Esophagus squamous epithelium (tissue), 5 donors: ENCODE measurements at regions of chr11 and their contacts with region 1.

Region 1: GRCh38 chr11:45102810-45103621 is 43.4 kb upstream of the PRDM11 start:
- DNase-seq: no peak
- H3K4me3 ChIP-seq: peak overlapping the region in 1 of 4 donors; percentile 27
- H3K27ac ChIP-seq: no peak overlapping the region
- H3K4me1 ChIP-seq: peaks cover 7 to 17% (median 8%) of the 10 kb centered on the region in 3 donors
- H3K27me3 ChIP-seq: peaks cover 0 to 25% (median 0%) of the 10 kb centered on the region in 4 donors
- CTCF ChIP-seq: peak; percentile 73 to 98 (median 95)
- POLR2A ChIP-seq: no peak

Region 2: DNA sequence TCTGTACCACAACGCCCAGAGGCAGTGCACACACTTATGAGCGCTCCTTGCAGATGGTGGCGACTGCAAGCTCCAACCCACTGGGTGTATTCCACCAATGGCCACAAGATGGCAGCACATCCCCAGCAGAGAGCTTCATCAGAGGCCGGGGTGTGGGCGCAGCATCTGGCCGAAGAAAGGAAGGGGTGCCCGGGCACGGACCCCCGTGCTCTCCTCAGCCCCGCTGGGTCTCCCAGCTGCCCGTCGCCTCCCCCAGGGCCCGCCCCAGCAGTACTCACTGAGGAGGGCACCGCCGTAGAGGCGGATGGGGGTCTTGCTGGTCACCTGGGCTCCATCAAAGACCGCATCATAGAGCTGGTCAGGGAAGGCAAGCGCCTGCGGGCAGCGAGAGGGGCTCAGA is 166.5 kb before region 1 on chr11:
- intact Hi-C with region 1: loop called (anchors 2 kb)
- DNase-seq: peak; percentile 25
- H3K4me3 ChIP-seq: no peak overlapping the region
- H3K27ac ChIP-seq: no peak overlapping the region
- H3K4me1 ChIP-seq: peaks cover 0 to 37% (median 0%) of the 10 kb centered on the region in 3 donors
- H3K27me3 ChIP-seq: no peaks in the 10 kb centered on the region
- CTCF ChIP-seq: peak; percentile 95 to 99 (median 97)
- POLR2A ChIP-seq: no peak

Region 3: GRCh38 chr11:45217991-45218390 is 115.0 kb after region 1 on chr11:
- intact Hi-C with region 1: no loop called
- DNase-seq: no peak
- H3K4me3 ChIP-seq: no peak overlapping the region
- H3K27ac ChIP-seq: no peak overlapping the region
- H3K4me1 ChIP-seq: no peaks in the 10 kb centered on the region
- H3K27me3 ChIP-seq: no peaks in the 10 kb centered on the region
- CTCF ChIP-seq: no peak
- POLR2A ChIP-seq: no peak